HCT116 (cell line): ENCODE measurements at regions of chr16 and their contacts with region 1.

Region 1: DNA sequence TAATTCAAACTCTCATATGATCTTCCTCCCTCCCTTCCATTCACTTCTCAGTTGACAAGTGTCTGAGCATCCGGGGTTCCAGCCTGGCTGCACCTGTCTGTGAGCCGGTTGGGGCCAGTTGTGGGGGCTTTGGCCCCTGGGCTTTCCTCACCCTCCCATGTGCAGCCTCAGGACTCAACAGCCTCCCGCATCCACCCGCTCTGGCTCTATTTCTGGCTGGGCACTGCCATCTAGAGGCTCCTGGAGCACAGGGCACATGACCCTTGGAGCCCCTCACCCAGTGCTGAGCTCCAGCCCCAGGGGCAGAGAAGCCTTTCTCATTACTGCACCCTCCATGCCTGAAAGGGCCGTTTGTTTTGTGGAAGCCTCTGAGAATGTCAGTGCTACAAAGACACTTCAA is 43.3 kb downstream of the HAPSTR1 start:
- DNase-seq: peak; percentile 29
- ATAC-seq: peak; percentile 82
- H3K4me3 ChIP-seq: no peak overlapping the region
- H3K27ac ChIP-seq: no peak overlapping the region
- H3K4me1 ChIP-seq: peaks cover 0 to 19% of the 10 kb centered on the region in 2 experiments; a peak in 2 of 4 replicates
- H3K27me3 ChIP-seq: peaks cover 9% of the 10 kb centered on the region; the same call in 1 of the 2 replicates
- CTCF ChIP-seq: peak; percentile 74 to 81 (median 77)
- POLR2A ChIP-seq: no peak
- RAD21 ChIP-seq: peak; percentile 92

Region 2: DNA sequence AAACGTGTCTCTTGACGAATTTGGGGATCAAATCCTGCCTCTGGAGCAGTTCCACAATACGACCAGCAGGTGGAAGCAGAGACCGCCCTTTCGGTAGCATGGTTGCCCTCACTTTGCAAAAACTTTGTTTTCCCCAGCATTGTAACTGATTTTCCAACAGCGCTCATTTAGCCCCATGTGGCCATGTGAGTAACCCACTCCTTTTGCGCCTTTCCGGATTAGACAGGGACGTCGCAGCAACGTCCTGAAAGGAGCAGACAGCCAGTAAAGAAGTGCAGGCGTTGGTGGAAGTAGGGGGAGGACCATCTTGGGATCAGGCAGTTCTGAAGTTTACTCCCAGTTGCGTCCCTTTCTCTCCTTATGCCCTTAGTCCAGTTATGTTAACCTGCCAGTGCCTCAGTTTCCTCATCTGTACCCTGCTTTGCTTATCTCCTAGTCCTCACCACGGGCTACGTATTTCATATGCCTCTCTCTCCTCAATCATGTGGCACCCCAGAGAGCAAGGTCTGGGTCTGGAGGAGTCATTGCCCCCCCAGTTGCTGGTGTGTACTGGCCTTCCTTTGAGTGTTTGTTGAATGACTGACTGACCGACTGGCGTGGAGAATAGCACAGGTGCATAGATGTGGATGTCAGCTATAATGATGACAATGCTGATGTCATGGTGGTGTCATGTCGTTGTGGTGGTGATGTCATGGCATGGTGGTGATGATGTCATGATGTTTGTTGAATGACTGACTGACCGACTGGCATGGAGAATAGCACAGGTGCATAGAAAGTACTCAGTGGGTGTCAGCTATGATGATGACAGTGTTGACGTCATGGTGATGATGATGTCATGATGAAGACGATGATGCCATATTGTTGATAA is 566.8 kb before region 1 on chr16:
- CTCF ChIA-PET with region 1: interaction called, 7 read pairs
- POLR2A ChIA-PET with region 1: no interaction called
- RAD21 ChIA-PET with region 1: no interaction called
- intact Hi-C with region 1: loop called (anchors 2 kb)
- DNase-seq: peak; percentile 94
- ATAC-seq: peak; percentile 89
- H3K4me3 ChIP-seq: no peak overlapping the region
- H3K27ac ChIP-seq: no peak overlapping the region
- H3K4me1 ChIP-seq: peaks cover 0 to 4% of the 10 kb centered on the region in 2 experiments; a peak in 1 of 4 replicates
- H3K27me3 ChIP-seq: no peaks in the 10 kb centered on the region
- CTCF ChIP-seq: peak; percentile 98 to 99 (median 99)
- POLR2A ChIP-seq: no peak
- RAD21 ChIP-seq: peak; percentile 99

Region 3: DNA sequence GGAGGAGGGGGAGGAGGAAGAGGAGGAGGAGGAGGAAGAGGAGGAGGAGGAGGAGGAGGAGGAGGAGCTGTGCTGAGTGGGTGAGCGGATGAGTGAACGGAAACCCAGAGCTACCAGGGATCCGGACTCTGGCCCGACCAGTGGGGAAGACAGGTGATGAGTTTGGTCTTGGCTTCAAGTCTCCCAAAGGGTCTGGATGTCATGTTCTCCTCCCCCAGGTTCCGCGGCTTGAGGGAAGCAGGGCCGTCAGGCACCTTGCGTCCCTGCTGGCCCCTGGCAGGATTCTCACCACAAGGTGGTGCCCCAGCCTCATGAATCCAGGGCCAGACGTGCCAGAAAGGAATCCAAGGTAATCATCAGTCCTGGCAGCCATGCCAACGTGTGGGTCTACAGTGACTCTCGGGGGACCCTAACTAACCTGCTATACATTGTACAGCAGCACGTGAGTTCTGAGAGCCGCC is 473.9 kb before region 1 on chr16:
- CTCF ChIA-PET with region 1: interaction called, 12 read pairs
- POLR2A ChIA-PET with region 1: no interaction called
- RAD21 ChIA-PET with region 1: interaction called in 1 of 2 experiments, 5 read pairs
- intact Hi-C with region 1: loop called (anchors 2 kb)
- DNase-seq: peak; percentile 62
- ATAC-seq: peak; percentile 96
- H3K4me3 ChIP-seq: no peak overlapping the region
- H3K27ac ChIP-seq: no peak overlapping the region
- H3K4me1 ChIP-seq: no peaks in the 10 kb centered on the region
- H3K27me3 ChIP-seq: no peaks in the 10 kb centered on the region
- CTCF ChIP-seq: peak; percentile 62 to 81 (median 74)
- POLR2A ChIP-seq: no peak
- RAD21 ChIP-seq: peak; percentile 86

Region 4: DNA sequence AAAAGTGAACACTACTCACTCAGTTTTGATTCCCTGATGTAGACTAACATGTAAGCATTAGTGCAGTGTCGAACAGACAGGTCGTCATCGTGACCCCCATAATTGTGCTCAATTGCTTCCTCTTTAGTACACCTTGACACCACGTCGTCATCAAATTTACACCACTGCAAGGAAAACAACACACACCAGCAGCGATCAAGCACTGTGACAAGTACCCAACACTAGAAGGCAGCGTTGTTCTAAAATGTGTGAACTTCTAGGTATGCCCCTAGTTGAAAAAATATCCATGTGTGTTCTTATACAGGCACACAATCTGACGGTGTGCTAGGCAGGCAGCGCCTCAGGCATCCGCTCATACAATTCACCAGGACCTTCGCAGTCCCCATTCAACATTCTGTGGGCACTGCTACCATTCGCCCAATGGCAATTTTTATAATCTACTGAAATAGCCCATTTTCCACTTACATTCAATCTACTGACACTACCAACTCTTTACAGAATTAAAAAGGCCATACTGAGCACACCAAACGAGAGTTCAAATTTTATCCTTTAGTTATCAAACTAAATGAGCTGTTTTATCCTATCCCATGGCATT is 229.5 kb before region 1 on chr16:
- CTCF ChIA-PET with region 1: interaction called, 4 read pairs
- POLR2A ChIA-PET with region 1: no interaction called
- RAD21 ChIA-PET with region 1: no interaction called
- intact Hi-C with region 1: loop called (anchors 1 kb)
- DNase-seq: peak; percentile 19
- ATAC-seq: peak; percentile 90
- H3K4me3 ChIP-seq: no peak overlapping the region
- H3K27ac ChIP-seq: no peak overlapping the region
- H3K4me1 ChIP-seq: no peaks in the 10 kb centered on the region
- H3K27me3 ChIP-seq: no peaks in the 10 kb centered on the region
- CTCF ChIP-seq: peak; percentile 51 to 56 (median 52)
- POLR2A ChIP-seq: no peak
- RAD21 ChIP-seq: peak; percentile 70

Region 5: GRCh38 chr16:8936421-8936820 is 198.3 kb before region 1 on chr16:
- CTCF ChIA-PET with region 1: interaction called, 12 read pairs
- POLR2A ChIA-PET with region 1: no interaction called
- RAD21 ChIA-PET with region 1: no interaction called
- intact Hi-C with region 1: loop called (anchors 2 kb)
- DNase-seq: peak; percentile 16
- ATAC-seq: peak; percentile 96
- H3K4me3 ChIP-seq: no peak overlapping the region
- H3K27ac ChIP-seq: no peak overlapping the region
- H3K4me1 ChIP-seq: peaks cover 7 to 19% of the 10 kb centered on the region in 2 experiments
- H3K27me3 ChIP-seq: no peaks in the 10 kb centered on the region
- CTCF ChIP-seq: peak; percentile 19 to 82 (median 64); a peak in 5 of 6 replicates
- POLR2A ChIP-seq: no peak
- RAD21 ChIP-seq: peak; percentile 42

Region 6: DNA sequence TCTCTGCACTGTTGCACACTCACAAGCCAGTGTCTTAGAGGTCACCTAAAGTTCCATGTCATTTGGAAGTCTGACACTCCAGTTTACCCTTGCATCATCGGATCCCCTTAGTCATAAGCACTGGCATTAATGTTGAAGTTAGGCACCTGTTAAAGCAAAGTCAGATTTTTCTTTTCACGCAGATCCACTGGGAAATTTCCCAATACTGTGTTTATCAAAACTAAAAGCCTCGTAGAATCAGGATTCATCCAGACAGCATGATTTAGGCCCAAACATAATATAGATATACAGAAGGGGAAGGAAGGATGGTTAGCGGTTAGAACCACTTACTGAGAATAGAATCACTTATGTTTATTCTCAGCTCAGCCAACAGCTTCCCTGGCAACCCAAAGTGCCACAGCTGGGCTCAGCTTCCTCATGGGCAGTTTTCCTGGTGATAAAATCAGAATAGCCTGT is 73.4 kb before region 1 on chr16:
- CTCF ChIA-PET with region 1: no interaction called
- POLR2A ChIA-PET with region 1: no interaction called
- RAD21 ChIA-PET with region 1: no interaction called
- intact Hi-C with region 1: no loop called
- DNase-seq: no peak
- ATAC-seq: no peak
- H3K4me3 ChIP-seq: no peak overlapping the region
- H3K27ac ChIP-seq: no peak overlapping the region
- H3K4me1 ChIP-seq: peaks cover 0 to 4% of the 10 kb centered on the region in 2 experiments; a peak in 1 of 4 replicates
- H3K27me3 ChIP-seq: no peaks in the 10 kb centered on the region
- CTCF ChIP-seq: no peak
- POLR2A ChIP-seq: no peak
- RAD21 ChIP-seq: no peak

Region 7: DNA sequence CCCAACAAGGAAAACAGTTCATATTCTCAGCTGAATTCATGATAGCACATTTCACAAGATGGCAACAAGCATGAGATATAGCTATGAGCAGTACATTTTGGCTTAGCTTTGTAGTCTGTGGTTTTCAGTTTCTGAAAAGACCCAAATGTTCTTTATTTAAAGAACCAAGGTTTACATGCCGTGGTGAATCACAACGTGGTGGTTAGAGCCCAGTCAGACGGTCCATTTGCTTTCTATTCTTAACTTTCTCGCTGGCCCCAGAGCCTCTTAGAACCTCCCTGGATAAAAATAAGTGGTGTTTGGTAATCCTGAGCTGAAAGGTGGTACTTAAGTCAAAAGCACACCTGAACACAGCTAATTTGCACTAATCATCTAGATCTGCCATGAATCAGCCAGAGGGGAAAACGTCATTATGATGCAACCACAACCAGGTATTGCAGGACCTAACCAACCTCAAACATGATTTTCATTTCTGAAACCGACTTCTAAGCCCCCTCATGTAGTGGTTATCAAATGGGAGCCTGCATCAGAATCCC is 61.9 kb before region 1 on chr16:
- CTCF ChIA-PET with region 1: no interaction called
- POLR2A ChIA-PET with region 1: no interaction called
- RAD21 ChIA-PET with region 1: no interaction called
- intact Hi-C with region 1: no loop called
- DNase-seq: no peak
- ATAC-seq: no peak
- H3K4me3 ChIP-seq: no peak overlapping the region
- H3K27ac ChIP-seq: no peak overlapping the region
- H3K4me1 ChIP-seq: peaks cover 24 to 68% of the 10 kb centered on the region in 2 experiments
- H3K27me3 ChIP-seq: no peaks in the 10 kb centered on the region
- CTCF ChIP-seq: no peak
- POLR2A ChIP-seq: no peak
- RAD21 ChIP-seq: no peak

Region 8: DNA sequence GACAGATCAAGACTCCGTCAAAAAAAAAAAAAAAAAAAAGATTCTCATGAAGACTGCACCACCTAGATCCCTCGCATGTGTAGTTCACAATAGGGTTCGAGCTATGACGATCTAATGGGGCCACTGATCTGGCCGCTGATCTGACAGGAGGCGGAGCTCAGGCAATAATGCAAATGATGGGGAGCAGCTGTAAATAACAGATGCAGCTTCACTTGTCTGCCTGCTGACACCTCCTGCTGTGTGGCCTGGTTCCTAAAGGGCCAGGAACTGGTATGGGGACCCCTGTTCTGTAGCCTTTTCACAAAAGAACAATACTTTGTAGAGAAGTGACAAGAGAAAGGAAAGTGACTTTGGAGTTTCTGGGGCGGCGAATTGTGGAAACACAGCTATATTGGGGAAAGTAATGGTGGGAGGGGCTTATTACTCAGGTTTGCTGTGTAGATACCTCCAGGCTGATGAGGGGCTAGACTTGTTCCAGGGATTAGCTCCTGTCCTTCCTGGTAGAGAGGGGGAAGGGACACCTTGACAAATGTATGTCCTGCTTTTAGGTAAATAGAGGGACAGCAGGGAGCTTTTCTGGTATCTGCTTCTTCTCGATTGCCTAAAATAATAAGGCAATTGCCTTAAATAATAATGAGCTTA is 13.8 kb after region 1 on chr16:
- CTCF ChIA-PET with region 1: interaction called, 25 read pairs
- POLR2A ChIA-PET with region 1: no interaction called
- RAD21 ChIA-PET with region 1: no interaction called
- intact Hi-C with region 1: no loop called
- DNase-seq: no peak
- ATAC-seq: no peak
- H3K4me3 ChIP-seq: no peak overlapping the region
- H3K27ac ChIP-seq: no peak overlapping the region
- H3K4me1 ChIP-seq: no peaks in the 10 kb centered on the region
- H3K27me3 ChIP-seq: no peaks in the 10 kb centered on the region
- CTCF ChIP-seq: no peak
- POLR2A ChIP-seq: no peak
- RAD21 ChIP-seq: no peak